Caco-2 (cell line): ENCODE measurements at regions of chr20 and their contacts with region 1.

Region 1: GRCh38 chr20:44187051-44187762 is at the start of gene JPH2:
- DNase-seq: peak; percentile 82 to 87
- H3K4me3 ChIP-seq: peak within 1 kb of the TSS; percentile 38
- H3K4me3 Mint-ChIP-seq: peak within 1 kb of the TSS; percentile 74
- H3K27ac Mint-ChIP-seq: peak within 1 kb of the TSS; percentile 13
- H3K4me1 ChIP-seq: peaks cover 45% of the 10 kb centered on the region
- H3K4me1 Mint-ChIP-seq: peaks cover 27% of the 10 kb centered on the region
- H3K27me3 ChIP-seq: no peaks in the 10 kb centered on the region
- H3K27me3 Mint-ChIP-seq: no peaks in the 10 kb centered on the region
- CTCF ChIP-seq: no peak
- total RNA-seq, gene JPH2: 10.5 and 11.1 TPM in 2 replicates

Region 2: DNA sequence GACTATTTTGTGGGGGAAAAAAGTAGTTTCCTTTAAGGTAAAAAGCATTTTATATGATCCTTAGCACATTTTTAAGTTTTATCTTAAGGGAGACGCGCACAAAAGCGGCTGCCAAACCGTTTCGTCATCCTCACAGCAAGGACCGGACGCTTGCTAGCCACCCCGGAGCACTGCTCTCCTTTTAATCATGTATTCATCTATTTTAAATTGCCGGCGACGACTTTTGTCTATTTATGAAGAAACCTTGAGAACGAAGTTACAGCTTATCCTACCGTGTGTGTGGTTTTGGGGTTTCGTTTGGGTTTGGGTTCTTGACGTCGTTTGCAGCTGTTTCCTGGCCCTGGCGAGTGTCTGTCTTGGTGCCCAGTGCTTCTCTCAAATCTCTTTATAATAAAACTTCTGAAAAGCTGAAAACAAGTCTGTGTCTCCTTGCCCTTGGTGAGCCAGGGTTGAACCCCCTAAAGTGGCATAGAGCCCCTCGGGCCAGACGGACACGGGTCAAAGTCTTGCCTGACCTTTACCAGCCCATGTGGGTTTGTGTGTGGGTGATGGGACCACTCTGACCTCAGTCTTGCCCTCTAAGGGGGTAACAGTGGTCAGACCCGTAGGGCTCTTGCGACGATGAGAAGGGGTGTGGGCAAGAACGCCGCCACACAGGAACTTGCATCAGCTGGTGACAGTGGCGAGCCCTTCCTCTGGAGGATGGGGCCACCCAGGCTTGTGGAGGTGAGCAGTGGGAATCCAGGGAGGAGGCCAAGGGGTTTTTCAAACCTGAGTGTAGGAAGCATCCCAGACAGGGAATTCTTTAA is 117.8 kb before region 1 on chr20:
- CTCF ChIA-PET with region 1: no interaction called
- POLR2A ChIA-PET with region 1: no interaction called
- intact Hi-C with region 1: no loop called
- DNase-seq: peak in 1 of 2 experiments; percentile 41
- H3K4me3 ChIP-seq: no peak overlapping the region
- H3K4me3 Mint-ChIP-seq: peak overlapping the region; percentile 4
- H3K27ac Mint-ChIP-seq: no peak overlapping the region
- H3K4me1 ChIP-seq: no peaks in the 10 kb centered on the region
- H3K4me1 Mint-ChIP-seq: no peaks in the 10 kb centered on the region
- H3K27me3 ChIP-seq: peaks cover 6% of the 10 kb centered on the region
- H3K27me3 Mint-ChIP-seq: peaks cover 38% of the 10 kb centered on the region
- CTCF ChIP-seq: no peak

Region 3: DNA sequence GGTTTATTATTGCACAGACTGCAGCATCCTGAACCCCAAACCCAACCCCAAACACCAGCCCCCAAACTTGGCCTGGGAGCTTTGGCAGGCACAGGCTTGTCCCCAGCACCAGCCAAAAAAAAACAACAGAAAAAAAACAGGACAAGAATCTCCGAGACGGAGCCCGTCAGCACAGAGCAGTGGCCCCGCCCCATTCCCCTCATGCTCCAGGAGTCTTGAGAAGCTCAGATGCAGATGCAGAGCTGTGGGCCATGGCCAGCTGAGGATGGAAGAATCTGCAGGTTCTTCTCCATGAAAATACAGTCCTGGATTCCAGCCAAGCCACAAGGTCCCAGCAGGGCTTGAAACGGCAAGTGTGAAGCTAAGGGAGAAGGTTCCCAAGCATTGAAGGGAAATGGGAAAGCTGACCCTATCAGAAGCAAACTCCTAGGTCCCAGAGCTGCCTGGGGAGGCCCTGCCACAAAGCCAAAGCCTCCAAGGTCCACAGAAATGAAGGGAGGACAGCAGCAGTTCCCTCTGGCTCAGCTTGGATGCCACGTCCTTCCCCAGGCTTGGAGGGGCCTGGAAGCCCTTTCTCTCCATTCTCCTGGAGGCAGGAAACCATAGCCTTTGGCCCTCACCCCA is 75.4 kb before region 1 on chr20:
- CTCF ChIA-PET with region 1: interaction called, 439 read pairs
- POLR2A ChIA-PET with region 1: interaction called, 13 read pairs
- intact Hi-C with region 1: loop called (anchors 1 kb)
- DNase-seq: peak in 1 of 2 experiments; percentile 47
- H3K4me3 ChIP-seq: no peak overlapping the region
- H3K4me3 Mint-ChIP-seq: no peak overlapping the region
- H3K27ac Mint-ChIP-seq: no peak overlapping the region
- H3K4me1 ChIP-seq: no peaks in the 10 kb centered on the region
- H3K4me1 Mint-ChIP-seq: no peaks in the 10 kb centered on the region
- H3K27me3 ChIP-seq: no peaks in the 10 kb centered on the region
- H3K27me3 Mint-ChIP-seq: peaks cover 2% of the 10 kb centered on the region
- CTCF ChIP-seq: no peak

Region 4: DNA sequence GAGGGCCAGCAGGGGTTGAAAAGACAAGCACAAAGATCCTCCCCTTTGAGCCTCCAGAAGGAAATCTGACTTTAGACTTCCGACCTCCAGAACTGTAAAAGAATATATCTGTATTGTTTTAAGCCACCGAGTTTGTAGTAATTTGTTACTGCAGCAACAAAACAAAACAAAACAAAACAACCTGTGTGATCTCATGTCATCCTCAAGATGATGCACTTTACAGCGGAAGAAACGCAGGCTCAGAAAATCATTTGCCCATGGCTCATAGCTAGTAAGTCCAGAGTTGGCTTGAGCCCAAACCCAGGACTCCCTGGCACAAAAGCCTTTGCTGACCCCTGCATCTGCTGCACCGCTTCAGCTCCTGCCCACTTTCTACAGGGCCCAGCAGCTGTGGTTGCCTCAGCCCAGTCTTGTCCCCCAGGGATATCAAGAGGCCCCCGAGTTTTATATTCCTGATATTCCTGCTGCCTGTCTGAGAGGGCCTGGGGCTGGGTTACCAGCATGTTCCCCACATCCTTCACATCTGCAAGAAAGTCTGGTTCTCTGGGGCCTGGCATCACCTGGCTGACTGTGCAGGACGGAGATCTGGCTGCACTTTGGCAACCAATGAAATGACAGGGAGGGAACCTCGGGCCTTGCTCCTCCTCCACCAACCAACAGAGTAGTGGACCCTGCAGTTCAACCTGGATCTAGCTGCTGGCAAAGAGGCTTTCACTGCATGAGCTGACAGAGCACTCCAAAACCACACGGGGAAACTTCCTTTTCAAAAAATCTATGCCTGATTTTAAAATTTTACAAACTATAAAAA is 57.1 kb before region 1 on chr20:
- CTCF ChIA-PET with region 1: interaction called, 52 read pairs
- POLR2A ChIA-PET with region 1: interaction called, 14 read pairs
- intact Hi-C with region 1: no loop called
- DNase-seq: peak in 1 of 2 experiments; percentile 42
- H3K4me3 ChIP-seq: no peak overlapping the region
- H3K4me3 Mint-ChIP-seq: no peak overlapping the region
- H3K27ac Mint-ChIP-seq: peak overlapping the region; percentile 3
- H3K4me1 ChIP-seq: peaks cover 19% of the 10 kb centered on the region
- H3K4me1 Mint-ChIP-seq: peaks cover 8% of the 10 kb centered on the region
- H3K27me3 ChIP-seq: no peaks in the 10 kb centered on the region
- H3K27me3 Mint-ChIP-seq: no peaks in the 10 kb centered on the region
- CTCF ChIP-seq: no peak

Region 5: GRCh38 chr20:44153636-44154043 is 33.6 kb before region 1 on chr20:
- CTCF ChIA-PET with region 1: interaction called, 13 read pairs
- POLR2A ChIA-PET with region 1: interaction called, 4 read pairs
- intact Hi-C with region 1: no loop called
- DNase-seq: no peak
- H3K4me3 ChIP-seq: no peak overlapping the region
- H3K4me3 Mint-ChIP-seq: no peak overlapping the region
- H3K27ac Mint-ChIP-seq: peak overlapping the region; percentile 3
- H3K4me1 ChIP-seq: peaks cover 33% of the 10 kb centered on the region
- H3K4me1 Mint-ChIP-seq: peaks cover 16% of the 10 kb centered on the region
- H3K27me3 ChIP-seq: no peaks in the 10 kb centered on the region
- H3K27me3 Mint-ChIP-seq: no peaks in the 10 kb centered on the region
- CTCF ChIP-seq: no peak

Region 6: GRCh38 chr20:44210422-44211176 is 23.4 kb after region 1 on chr20 and contains the start of gene OSER1:
- CTCF ChIA-PET with region 1: interaction called, 14 read pairs
- POLR2A ChIA-PET with region 1: interaction called, 5 read pairs
- intact Hi-C with region 1: loop called (anchors 1 kb)
- DNase-seq: peak; percentile 100
- H3K4me3 ChIP-seq: peak within 1 kb of the TSS; percentile 74
- H3K4me3 Mint-ChIP-seq: peak within 1 kb of the TSS; percentile 95
- H3K27ac Mint-ChIP-seq: peak within 1 kb of the TSS; percentile 96
- H3K4me1 ChIP-seq: peaks cover 19% of the 10 kb centered on the region
- H3K4me1 Mint-ChIP-seq: peaks cover 27% of the 10 kb centered on the region
- H3K27me3 ChIP-seq: no peaks in the 10 kb centered on the region
- H3K27me3 Mint-ChIP-seq: no peaks in the 10 kb centered on the region
- CTCF ChIP-seq: no peak
- total RNA-seq, gene OSER1: 79.7 and 82.3 TPM in 2 replicates